Activated CD8-positive, alpha-beta T cell treated with anti-CD3 and anti-CD28 coated beads for 36 hours (primary cell): ENCODE measurements at regions of chr7 and their contacts with region 1.

Region 1: DNA sequence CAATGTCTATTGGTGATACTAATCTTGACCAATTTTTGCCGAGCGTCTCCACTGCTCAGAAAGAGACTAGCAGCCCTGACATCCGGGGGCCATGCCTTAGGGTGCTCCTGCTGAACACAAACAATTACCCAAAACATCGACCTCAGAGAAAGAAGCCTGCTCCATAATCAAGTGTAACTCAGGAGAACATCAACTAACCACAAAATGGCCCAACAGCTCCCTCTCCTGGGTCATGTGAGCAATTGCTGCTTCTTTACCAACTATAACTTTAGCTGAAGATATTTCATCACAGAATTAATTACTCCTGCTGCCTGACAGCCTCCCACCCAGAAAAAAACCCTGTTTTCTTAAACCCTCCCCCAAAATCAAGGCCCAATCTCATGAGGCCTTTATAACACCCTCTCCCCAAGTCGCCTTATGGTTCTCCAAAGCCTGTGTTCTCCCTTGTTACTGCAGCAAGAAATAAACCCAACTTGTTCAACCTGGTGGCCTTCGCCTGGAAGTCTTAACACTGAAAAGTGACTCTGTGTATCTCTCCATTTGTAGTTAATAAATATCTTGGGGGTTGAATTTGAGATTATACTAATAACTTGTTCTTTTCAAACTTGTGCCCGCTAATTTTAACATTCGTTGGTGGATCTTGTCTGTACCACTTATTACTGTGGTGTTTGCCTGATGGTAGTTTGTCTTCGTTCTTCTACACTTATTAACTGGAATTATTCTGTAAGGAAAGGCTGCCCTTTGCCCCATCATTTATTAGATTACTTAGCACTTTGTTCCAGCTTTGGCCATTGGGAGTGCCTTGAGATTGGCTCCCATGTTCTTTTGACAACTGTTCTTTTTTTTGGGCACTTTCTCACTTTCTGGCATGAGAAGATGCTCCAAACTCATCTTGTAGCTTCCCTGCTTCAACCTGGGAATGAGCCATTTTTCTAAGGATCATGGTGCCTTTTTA is 21.2 kb upstream of the RAMP3 start:
- DNase-seq: peak; percentile 77
- ATAC-seq: peak; percentile 95
- H3K4me3 Mint-ChIP-seq: no peak overlapping the region
- H3K27ac Mint-ChIP-seq: peak overlapping the region; percentile 59
- H3K4me1 Mint-ChIP-seq: peaks cover 9% of the 10 kb centered on the region
- H3K27me3 Mint-ChIP-seq: no peaks in the 10 kb centered on the region
- CTCF ChIP-seq: peak; percentile 91

Region 2: DNA sequence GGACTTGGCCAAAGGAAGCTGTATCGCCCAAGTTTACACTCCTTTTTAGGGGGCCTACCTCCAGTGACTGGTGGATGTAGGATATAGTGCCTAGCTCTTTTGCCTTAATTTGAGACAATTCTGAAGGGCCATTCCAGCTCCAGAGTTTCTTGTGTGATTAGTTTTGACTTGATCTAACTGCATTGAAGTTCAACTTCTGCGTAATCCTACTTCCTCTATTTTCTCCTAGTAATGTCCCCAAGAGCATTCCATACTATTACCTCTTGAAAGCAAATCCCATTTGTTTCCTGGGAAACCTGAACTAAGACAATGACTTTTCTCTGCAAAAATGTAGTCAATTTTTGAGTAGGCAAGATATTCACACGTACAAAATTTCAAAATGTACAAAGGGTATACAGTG is 283.8 kb before region 1 on chr7:
- CTCF ChIA-PET with region 1: interaction called, 40 read pairs
- POLR2A ChIA-PET with region 1: no interaction called
- intact Hi-C with region 1: loop called (anchors 1 kb)
- DNase-seq: no peak
- ATAC-seq: no peak
- H3K4me3 Mint-ChIP-seq: no peak overlapping the region
- H3K27ac Mint-ChIP-seq: no peak overlapping the region
- H3K4me1 Mint-ChIP-seq: peaks cover 27% of the 10 kb centered on the region
- H3K27me3 Mint-ChIP-seq: no peaks in the 10 kb centered on the region
- CTCF ChIP-seq: no peak

Region 3: GRCh38 chr7:44921607-44922359 is 214.6 kb before region 1 on chr7:
- CTCF ChIA-PET with region 1: interaction called, 11 read pairs
- POLR2A ChIA-PET with region 1: no interaction called
- intact Hi-C with region 1: no loop called
- DNase-seq: peak; percentile 99
- ATAC-seq: peak; percentile 99
- H3K4me3 Mint-ChIP-seq: no peak overlapping the region
- H3K27ac Mint-ChIP-seq: peak overlapping the region; percentile 63
- H3K4me1 Mint-ChIP-seq: peaks cover 16% of the 10 kb centered on the region
- H3K27me3 Mint-ChIP-seq: peaks cover under 1% of the 10 kb centered on the region
- CTCF ChIP-seq: peak; percentile 88

Region 4: GRCh38 chr7:44999245-45000095 is 136.9 kb before region 1 on chr7:
- CTCF ChIA-PET with region 1: interaction called, 15 read pairs
- POLR2A ChIA-PET with region 1: interaction called, 3 read pairs
- intact Hi-C with region 1: no loop called
- DNase-seq: peak; percentile 100
- ATAC-seq: peak; percentile 90
- H3K4me3 Mint-ChIP-seq: peak overlapping the region; percentile 83
- H3K27ac Mint-ChIP-seq: peak overlapping the region; percentile 93
- H3K4me1 Mint-ChIP-seq: peaks cover 54% of the 10 kb centered on the region
- H3K27me3 Mint-ChIP-seq: no peaks in the 10 kb centered on the region
- CTCF ChIP-seq: no peak

Region 5: DNA sequence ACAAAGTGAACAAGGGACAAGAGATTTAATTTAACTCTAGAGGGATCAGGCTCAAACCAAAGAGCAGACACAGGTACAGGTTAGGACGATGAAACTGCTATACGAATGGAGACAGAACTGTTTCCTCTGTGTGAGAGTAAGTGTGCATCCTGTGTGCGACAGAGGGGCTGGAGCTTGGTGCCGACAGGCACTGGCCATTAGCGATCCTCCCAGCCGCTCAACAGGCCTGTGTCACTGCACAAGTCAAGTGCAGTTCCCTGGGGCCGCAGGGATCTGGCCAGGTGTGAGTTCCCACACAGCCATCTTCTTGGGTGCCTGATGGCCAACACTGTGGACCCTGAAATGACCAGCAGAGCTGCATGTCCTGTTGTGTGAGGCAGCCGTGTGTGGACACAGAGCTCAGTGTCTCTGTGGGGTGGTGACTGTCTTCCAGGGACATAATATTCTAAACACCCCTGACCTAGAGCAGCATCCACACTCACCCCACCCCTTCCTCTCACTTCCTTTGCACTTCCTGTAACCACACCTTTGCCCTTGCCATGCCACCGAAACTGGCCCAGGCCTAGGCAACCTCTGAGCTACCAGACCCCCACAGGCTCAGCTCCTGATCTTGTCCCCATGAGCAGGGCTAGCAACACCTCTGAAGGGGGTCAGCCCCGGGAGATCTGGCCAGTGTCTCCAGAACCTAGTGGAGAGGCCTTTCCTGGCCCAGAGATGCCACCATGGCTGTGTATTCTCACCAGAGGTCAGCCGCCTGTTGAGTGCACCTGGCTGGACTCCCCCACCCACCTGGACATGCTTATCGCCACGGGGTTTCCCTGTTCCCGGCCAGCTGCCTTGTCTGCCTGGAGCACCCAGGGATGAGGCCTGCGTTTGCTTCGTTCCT is 13.2 kb before region 1 on chr7:
- CTCF ChIA-PET with region 1: interaction called, 41 read pairs
- POLR2A ChIA-PET with region 1: interaction called, 4 read pairs
- intact Hi-C with region 1: no loop called
- DNase-seq: no peak
- ATAC-seq: peak; percentile 48
- H3K4me3 Mint-ChIP-seq: no peak overlapping the region
- H3K27ac Mint-ChIP-seq: peak overlapping the region; percentile 85
- H3K4me1 Mint-ChIP-seq: peaks cover 13% of the 10 kb centered on the region
- H3K27me3 Mint-ChIP-seq: no peaks in the 10 kb centered on the region
- CTCF ChIP-seq: no peak